ENCODE measurements at regions of chr17 and their contacts with region 1.

Region 1: DNA sequence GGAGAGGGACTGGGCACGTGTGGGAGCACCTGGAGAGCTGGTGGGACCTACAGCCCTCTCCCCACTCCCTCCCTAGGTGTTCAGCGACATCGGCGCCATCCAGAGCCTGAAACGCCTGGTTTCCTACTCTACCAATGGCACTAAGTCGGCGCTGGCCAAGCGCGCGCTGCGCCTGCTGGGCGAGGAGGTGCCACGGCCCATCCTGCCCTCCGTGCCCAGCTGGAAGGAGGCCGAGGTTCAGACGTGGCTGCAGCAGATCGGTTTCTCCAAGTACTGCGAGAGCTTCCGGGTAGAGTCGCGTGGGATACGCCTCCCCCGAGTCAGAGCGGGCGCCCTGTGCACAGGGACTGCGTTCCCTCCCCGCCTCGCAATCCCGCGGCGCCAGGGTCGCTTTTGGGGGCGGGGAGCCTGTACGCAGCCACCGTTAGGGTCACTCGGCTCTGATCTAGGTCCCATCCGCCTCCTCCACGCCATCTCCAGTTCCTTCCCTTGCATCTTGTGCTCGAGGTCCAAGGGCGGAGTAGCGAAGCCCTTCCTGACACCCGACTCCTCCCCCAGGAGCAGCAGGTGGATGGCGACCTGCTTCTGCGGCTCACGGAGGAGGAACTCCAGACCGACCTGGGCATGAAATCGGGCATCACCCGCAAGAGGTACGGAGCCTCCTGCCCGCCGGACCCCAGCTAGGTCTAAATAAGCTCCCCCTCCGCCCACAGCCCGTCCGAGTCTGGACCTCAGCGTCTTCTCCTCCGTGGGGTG is 13.0 kb downstream of the SARM1 start:
- DNase-seq: peak; percentile 84
- H3K4me3 ChIP-seq: peak overlapping the region; percentile 72
- H3K27ac ChIP-seq: peak overlapping the region; percentile 51
- H3K4me1 ChIP-seq: no peaks in the 10 kb centered on the region
- H3K27me3 ChIP-seq: peaks cover 7% of the 10 kb centered on the region
- CTCF ChIP-seq: no peak

Region 2: GRCh38 chr17:28416703-28417311 is 32.3 kb after region 1 on chr17:
- intact Hi-C with region 1: loop called (anchors 5 kb)
- DNase-seq: peak; percentile 59
- H3K4me3 ChIP-seq: no peak overlapping the region
- H3K27ac ChIP-seq: no peak overlapping the region
- H3K4me1 ChIP-seq: no peaks in the 10 kb centered on the region
- H3K27me3 ChIP-seq: no peaks in the 10 kb centered on the region
- CTCF ChIP-seq: peak; percentile 65